A549 (cell line): ENCODE measurements at regions of chr9 and their contacts with region 1.

Region 1: DNA sequence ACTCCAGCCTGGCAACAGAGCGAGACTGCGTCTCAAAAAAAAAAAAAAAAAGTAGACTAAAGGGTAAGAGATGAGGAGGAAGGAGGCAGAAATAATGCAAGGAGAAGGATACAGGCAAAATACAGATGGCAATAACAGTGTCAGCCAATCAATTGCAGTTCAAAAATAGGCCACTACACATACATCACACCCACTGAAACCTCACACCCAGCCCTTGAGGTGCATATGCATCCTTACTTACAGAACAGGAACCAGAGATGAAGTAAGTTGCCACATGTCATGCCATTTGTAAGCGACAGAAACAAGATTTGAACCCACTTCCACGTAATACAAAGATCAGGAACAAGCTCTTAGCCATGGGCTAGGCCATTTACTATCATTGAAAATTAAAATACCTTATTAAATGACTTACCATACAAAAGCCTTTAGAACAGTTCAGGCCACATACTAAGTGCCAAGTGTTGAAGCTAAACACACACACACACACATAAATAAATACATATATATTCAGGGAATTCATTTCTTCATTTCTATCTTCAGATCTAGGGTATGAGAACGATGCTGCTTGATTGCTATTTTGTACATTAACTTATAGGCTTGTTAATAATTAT is 98.4 kb downstream of the FNBP1 start:
- DNase-seq: no peak
- ATAC-seq: no peak
- H3K4me3 ChIP-seq: no peak overlapping the region
- H3K27ac ChIP-seq: no peak overlapping the region
- H3K4me1 ChIP-seq: no peaks in the 10 kb centered on the region
- CTCF ChIP-seq: no peak
- EP300 ChIP-seq: no peak
- POLR2A ChIP-seq: no peak
- RAD21 ChIP-seq: no peak

Region 2: DNA sequence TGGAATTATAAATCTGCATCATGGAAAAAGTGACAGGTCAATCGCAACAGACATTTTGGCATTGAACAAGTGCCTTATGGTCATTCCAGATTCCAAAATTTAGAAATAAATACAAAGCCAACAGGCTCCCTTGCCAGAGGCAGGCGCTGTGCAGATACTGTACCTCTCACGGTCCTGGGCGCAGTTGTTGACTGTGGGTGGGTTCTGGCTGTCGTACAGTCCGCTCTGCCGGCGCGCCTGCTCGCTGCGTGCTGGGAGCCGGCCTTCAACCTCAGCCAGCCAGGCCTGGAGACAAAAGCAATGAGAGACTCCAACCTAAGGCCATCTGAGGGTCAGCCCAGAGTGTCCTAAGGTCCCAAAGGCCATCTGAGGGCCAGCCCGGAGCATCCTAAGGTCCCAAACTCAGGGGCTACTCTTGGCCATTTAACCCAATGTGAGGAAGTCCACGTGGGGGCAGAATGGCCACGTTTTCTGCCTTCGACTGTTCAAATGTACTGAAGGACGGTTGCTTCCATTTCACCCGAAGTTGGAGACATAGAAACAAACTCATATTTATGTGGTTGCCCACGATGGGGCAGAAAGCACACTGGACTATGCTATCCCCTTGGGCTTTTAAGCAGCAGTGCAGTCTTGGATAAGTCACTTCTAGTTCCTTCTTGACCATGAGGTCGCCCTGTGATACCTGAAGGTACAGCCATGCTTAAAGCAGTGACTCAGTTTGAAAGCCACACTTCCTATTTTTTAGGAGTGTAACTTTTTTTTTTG is 44.2 kb before region 1 on chr9:
- CTCF ChIA-PET with region 1: no interaction called
- POLR2A ChIA-PET with region 1: no interaction called
- DNase-seq: no peak
- ATAC-seq: no peak; a peak in 1 of 6 replicates
- H3K4me3 ChIP-seq: no peak overlapping the region
- H3K27ac ChIP-seq: no peak overlapping the region
- H3K4me1 ChIP-seq: no peaks in the 10 kb centered on the region
- CTCF ChIP-seq: no peak
- EP300 ChIP-seq: no peak
- POLR2A ChIP-seq: no peak
- RAD21 ChIP-seq: no peak

Region 3: DNA sequence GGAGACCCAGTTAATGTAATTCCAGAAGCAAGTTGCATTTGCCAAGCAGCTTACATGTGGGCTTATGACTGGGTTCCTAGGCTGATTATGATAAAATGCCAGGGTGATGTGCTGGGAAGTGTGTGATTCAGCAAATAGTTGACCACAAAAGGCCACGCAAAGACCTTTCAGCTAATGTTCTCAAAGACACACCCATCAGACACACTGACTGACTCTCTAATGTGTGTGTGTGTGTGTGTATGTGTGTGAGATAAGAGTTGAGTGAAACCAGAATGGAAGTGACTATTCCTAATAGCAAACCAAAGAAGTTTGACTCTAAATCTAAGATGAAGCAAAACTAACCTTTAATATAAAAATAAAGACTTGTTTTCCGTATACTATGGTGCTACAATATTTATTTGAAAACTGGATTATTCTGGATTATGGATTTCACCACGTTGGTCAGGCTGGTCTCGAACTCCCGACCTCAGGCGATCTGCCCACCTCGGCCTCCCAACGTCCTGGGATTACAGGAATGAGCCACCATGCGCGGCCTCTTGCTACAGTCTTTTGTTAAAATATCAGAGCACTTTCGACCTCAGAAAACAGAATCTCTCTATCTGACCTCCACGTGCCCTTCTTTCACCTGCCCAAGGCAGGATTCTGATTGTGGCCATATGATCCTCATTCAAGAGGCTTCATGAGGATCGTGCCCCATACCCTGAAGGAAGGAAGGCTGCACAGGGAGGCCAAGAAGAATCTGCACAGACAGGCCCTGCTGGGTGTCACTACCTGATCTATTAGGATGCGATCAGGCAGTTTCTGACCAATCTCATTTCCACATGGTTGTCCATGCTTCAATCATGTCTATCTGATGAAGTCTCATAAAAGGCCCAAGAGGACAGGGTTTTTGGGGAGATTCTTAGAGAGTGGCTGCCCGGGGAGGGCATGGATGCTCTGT is 33.7 kb before region 1 on chr9:
- CTCF ChIA-PET with region 1: no interaction called
- POLR2A ChIA-PET with region 1: interaction called, 10 read pairs
- DNase-seq: peak; percentile 60 to 90
- ATAC-seq: peak; percentile 77 to 90; a peak in 5 of 6 replicates
- H3K4me3 ChIP-seq: no peak overlapping the region
- H3K27ac ChIP-seq: peak overlapping the region; percentile 50 to 80
- H3K4me1 ChIP-seq: peaks cover 13% of the 10 kb centered on the region; the same call in 2 of the 3 replicates
- CTCF ChIP-seq: no peak
- EP300 ChIP-seq: peak; percentile 10 to 24; a peak in 1 of 5 replicates
- POLR2A ChIP-seq: no peak
- RAD21 ChIP-seq: no peak

Region 4: DNA sequence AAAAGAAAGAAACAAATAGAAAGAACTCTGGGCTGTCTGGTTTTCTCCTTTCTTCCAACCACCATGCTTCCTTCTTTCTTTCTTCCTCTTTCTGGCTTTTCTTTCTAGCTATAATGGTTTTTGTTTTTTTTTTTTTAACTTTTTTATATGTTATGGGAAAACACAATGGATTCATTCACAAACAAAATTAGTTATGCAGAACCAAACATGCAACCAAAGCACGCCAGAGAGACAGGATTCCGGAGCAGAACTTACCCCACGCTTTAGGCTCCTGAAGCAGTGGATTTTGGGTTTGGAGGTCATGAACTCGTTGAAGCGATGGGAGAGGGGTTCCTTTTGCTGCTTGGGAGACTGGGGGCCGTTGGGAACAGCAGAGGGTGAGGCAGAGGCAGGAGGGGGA is 21.0 kb before region 1 on chr9:
- CTCF ChIA-PET with region 1: no interaction called
- POLR2A ChIA-PET with region 1: no interaction called
- DNase-seq: no peak
- ATAC-seq: no peak
- H3K4me3 ChIP-seq: no peak overlapping the region
- H3K27ac ChIP-seq: no peak overlapping the region
- H3K4me1 ChIP-seq: no peaks in the 10 kb centered on the region
- CTCF ChIP-seq: no peak
- EP300 ChIP-seq: no peak
- POLR2A ChIP-seq: no peak
- RAD21 ChIP-seq: no peak

Region 5: DNA sequence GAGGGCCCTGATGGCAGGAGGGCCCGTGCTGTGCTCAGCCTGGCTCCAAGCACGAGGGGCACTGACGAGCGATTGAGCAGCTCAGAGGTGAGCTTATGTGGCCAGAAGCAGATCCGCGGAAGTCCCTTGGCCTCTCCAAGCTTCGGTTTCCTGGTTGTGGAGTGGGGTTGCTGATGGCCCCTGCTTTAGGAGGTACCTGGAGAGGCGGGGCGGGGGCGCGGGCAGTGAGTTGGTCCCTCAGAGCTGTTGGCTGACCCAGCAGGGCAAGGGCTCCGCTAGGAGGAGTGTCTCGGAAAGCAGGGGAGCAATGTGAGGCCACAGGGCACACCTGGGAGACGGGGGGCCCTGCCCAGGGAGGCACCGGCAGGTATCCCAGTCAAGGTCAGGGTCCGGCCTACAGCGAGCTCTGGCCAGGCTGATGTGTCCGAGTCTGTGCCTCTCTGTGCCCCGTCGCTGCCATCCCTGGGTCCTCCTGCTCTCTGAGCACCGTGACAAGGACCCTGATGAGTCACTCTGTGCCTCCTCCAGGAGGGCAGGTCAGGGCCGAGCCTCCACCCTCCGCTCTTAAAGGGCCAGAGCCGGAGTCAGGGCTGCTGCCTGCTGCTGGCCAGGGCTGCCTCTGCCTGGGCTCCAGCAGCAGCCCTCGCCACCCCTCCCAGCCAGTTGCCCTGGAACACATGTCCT is 242.4 kb after region 1 on chr9:
- CTCF ChIA-PET with region 1: no interaction called
- POLR2A ChIA-PET with region 1: no interaction called
- DNase-seq: peak; percentile 76 to 97
- ATAC-seq: peak; percentile 93 to 95
- H3K4me3 ChIP-seq: peak overlapping the region; percentile 44
- H3K27ac ChIP-seq: peak overlapping the region; percentile 65 to 88
- H3K4me1 ChIP-seq: peaks cover 48% of the 10 kb centered on the region
- CTCF ChIP-seq: no peak
- EP300 ChIP-seq: no peak
- POLR2A ChIP-seq: no peak
- RAD21 ChIP-seq: no peak